PC-3 (cell line): ENCODE measurements at regions of chr2 and their contacts with region 1.

Region 1: DNA sequence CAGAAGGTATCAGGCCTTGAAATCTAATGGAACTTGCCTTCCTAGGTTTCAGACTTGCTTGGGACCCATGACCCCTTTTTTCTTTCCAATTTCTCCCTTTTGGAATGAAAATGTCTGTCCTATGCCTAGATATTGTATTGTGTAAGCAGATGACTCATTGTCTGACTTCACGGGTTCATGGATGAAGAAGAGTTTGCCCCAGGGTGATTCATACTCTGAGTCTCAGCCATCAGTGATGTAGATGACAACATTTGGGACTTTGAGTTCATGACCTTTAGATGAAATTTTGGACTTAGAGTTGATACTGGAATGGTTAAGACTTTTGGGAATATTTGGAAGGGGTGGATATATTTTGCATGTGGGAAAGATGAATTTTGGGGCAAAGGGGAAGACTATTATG is 11.2 kb upstream of the SCYGR5 start:
- DNase-seq: peak; percentile 85
- ATAC-seq: peak; percentile 68
- H3K4me3 ChIP-seq: no peak overlapping the region
- H3K27ac ChIP-seq: no peak overlapping the region
- H3K4me1 ChIP-seq: 0 out of 2 replicates have a peak, but pooled peaks cover 5% of the 10 kb centered on the region
- H3K27me3 ChIP-seq: no peaks in the 10 kb centered on the region
- CTCF ChIP-seq: no peak

Region 2: DNA sequence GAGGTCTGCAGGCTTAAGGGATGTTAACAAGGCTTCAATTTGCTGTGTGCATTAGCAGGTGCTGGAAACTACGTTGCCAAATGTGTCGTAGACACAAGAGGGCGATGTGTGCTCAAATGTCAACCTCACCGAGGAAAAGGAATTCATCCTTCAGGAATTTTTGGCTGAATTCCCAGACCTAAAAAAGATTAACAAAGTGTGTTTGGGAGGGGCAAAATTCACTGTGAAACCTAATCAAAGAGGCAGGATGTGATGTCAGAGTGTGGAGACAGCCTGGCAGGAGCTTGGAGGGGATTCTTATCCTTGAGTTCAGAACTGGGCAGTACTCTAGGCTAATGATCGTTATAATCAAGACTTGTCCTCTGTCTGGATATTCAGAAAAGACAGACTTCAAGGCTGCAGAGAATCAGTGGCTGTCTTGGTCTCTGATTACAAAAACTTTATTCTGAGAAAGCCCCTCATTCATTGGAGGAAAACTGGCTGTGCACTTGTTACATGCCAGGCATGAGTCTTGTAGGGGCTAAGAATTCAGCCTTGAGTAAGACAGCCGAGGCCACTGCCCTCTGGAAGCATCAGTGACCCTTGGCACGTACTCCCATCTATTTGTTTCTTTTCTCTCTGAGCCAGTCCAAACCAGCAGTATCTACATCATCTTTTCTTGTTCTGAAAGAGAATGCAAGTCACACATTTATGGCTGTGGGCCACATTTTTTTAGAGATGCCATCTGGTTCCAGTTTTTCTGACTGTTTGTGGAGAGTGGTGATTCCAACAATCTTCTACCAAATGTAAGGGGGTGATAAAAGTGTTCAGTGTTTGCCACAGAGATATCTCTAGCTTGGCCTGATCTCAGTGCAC is 249.1 kb before region 1 on chr2:
- CTCF ChIA-PET with region 1: interaction called, 4 read pairs
- POLR2A ChIA-PET with region 1: no interaction called
- intact Hi-C with region 1: loop called (anchors 2 kb)
- DNase-seq: peak; percentile 99
- ATAC-seq: peak; percentile 91
- H3K4me3 ChIP-seq: no peak overlapping the region
- H3K27ac ChIP-seq: peak overlapping the region; percentile 48
- H3K4me1 ChIP-seq: peaks cover 14% of the 10 kb centered on the region
- H3K27me3 ChIP-seq: no peaks in the 10 kb centered on the region
- CTCF ChIP-seq: peak; percentile 90

Region 3: DNA sequence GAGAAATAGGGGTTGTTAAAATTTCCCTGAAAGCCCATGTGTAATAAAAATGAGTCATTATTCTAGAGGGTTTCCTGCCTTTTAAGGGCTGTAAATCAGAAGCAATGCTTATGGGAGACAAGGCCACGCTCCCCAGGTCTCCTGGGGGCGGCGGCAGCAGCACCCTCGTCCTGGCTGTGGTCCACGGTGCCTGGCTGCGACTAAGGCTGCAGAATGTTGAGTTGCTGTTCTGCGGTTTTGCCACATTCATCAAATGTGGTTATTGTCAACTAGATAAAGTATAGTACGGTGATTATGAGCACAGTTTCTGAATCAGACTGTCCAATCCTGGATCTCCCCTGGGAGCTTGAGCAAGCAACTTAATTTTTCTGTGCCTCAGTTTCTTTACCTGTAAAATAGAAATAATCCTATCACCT is 195.4 kb before region 1 on chr2:
- CTCF ChIA-PET with region 1: no interaction called
- POLR2A ChIA-PET with region 1: no interaction called
- intact Hi-C with region 1: no loop called
- DNase-seq: peak; percentile 64
- ATAC-seq: peak; percentile 84
- H3K4me3 ChIP-seq: no peak overlapping the region
- H3K27ac ChIP-seq: no peak overlapping the region
- H3K4me1 ChIP-seq: peaks cover 28% of the 10 kb centered on the region
- H3K27me3 ChIP-seq: no peaks in the 10 kb centered on the region
- CTCF ChIP-seq: no peak

Region 4: DNA sequence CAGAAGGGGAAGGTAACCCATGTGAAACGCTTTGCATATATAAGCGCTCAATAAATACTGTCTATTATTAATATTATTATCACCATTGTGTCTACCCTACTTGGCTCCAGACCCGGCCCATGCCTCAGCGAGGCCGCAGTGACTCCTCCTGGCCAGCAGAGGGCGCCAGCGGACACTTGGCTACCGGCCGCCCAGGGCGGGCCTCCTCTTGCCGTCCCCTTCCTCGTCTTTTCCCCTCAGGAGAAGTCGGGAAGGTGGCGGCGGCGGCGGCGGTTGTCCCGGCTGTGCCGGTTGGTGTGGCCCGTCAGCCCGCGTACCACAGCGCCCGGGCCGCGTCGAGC is 183.6 kb before region 1 on chr2 and contains the start of gene AGFG1:
- CTCF ChIA-PET with region 1: no interaction called
- POLR2A ChIA-PET with region 1: no interaction called
- intact Hi-C with region 1: loop called (anchors 5 kb)
- DNase-seq: peak; percentile 84
- ATAC-seq: peak; percentile 53
- H3K4me3 ChIP-seq: peak within 1 kb of the TSS; percentile 94
- H3K27ac ChIP-seq: no peak within 1 kb of the TSS
- H3K4me1 ChIP-seq: peaks cover 42% of the 10 kb centered on the region
- H3K27me3 ChIP-seq: no peaks in the 10 kb centered on the region
- CTCF ChIP-seq: peak; percentile 87
- total RNA-seq, gene AGFG1: 44.0 and 56.3 TPM in 2 replicates

Region 5: DNA sequence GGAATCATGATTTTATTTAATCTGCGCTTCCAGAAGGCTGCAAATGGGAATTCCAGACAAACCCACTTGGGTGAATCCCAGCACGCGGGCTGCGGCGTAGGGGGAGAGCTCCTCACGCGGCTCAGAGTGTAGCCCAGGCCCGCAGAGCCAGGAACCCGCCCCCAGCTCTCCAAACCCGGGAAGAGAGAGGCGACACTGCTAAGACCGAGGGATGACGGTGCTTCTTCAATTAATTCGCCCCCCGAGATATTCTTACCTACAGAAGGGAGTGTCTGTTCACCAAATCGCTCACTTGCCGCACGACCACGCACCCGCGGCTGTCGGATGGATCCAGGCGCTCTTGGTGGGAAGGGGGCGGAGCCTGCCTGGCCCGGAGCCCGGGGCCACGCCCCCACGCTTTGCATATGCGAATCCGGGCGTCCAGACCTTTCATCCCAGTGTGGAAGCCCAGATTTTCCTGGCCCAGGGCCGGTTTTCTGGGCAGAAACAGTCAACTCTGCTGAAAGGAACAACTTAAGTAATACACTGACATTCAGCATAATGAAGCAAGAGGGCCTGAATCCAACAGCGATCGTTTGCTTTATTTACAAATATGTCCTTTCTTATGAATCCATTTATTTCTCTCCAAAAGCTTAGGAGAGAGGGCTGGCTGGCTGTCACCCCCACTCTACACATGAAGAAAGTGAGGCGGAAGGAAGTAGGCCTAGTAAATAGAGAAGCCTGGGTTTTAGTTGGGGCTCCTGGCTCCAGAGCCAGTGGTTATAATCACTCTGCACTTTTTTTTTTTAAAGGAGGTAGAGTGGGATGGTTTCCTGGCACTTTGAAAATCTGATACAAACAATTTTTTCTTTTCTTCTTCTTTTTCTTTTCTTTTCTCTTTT is 62.5 kb after region 1 on chr2 and contains the start of gene SLC19A3:
- CTCF ChIA-PET with region 1: no interaction called
- POLR2A ChIA-PET with region 1: no interaction called
- intact Hi-C with region 1: no loop called
- DNase-seq: no peak
- ATAC-seq: no peak
- H3K4me3 ChIP-seq: no peak within 1 kb of the TSS
- H3K27ac ChIP-seq: no peak within 1 kb of the TSS
- H3K4me1 ChIP-seq: no peaks in the 10 kb centered on the region
- H3K27me3 ChIP-seq: no peaks in the 10 kb centered on the region
- CTCF ChIP-seq: no peak
- total RNA-seq, gene SLC19A3: 0.26 TPM in 1 of 2 replicates, not detected in the other

Region 6: GRCh38 chr2:227766373-227766883 is 111.0 kb after region 1 on chr2:
- CTCF ChIA-PET with region 1: interaction called, 20 read pairs
- POLR2A ChIA-PET with region 1: no interaction called
- intact Hi-C with region 1: loop called (anchors 1 kb)
- DNase-seq: peak; percentile 81
- ATAC-seq: peak; percentile 100
- H3K4me3 ChIP-seq: no peak overlapping the region
- H3K27ac ChIP-seq: no peak overlapping the region
- H3K4me1 ChIP-seq: no peaks in the 10 kb centered on the region
- H3K27me3 ChIP-seq: no peaks in the 10 kb centered on the region
- CTCF ChIP-seq: peak; percentile 91

Region 7: DNA sequence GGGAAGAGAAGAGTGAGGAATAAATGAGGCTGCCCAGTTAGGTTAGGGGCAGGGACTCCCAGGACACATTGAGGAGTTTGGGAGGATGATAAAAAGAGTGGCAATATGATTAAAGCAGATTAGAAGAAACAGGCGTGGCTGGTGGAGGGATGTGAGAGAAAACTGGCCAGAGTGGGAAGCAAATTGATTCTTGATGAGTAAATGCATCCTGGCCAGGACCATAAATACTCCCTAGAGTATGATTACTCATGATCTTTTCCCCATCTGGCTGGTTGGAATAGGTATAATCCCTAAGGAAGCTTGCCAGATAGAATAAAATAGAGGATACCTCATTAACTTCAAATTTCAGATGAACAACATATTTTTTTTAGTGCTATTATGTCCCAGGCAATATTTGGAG is 194.5 kb after region 1 on chr2:
- CTCF ChIA-PET with region 1: no interaction called
- POLR2A ChIA-PET with region 1: no interaction called
- intact Hi-C with region 1: loop called (anchors 1 kb)
- DNase-seq: peak; percentile 72
- ATAC-seq: peak; percentile 76
- H3K4me3 ChIP-seq: no peak overlapping the region
- H3K27ac ChIP-seq: peak overlapping the region; percentile 82
- H3K4me1 ChIP-seq: peaks cover 47% of the 10 kb centered on the region
- H3K27me3 ChIP-seq: no peaks in the 10 kb centered on the region
- CTCF ChIP-seq: no peak

Region 8: DNA sequence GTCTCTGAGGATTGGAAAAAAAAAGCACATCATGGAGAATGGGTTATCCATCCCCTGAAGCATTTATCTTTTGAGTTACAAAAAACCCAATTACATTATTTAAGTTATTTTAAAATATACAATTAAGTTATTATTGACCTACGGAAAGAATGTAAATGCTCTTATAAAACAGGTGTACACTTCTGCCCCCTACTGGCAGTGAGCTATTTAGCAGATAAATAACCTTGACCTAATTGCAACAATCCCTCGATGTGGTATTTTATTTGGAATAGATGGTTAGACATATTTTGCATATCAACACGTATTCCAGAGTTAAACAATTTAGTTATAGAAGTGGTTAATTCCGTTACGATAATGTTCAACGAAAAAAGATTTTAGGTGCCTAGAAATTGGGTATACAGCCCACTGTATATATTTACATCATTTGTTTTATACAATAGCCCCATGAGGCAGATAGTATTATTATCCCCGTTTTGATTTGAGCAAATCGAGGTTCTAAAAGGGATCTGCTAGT is 206.8 kb after region 1 on chr2:
- CTCF ChIA-PET with region 1: interaction called, 10 read pairs
- POLR2A ChIA-PET with region 1: no interaction called
- intact Hi-C with region 1: loop called (anchors 5 kb)
- DNase-seq: peak; percentile 71
- ATAC-seq: no peak
- H3K4me3 ChIP-seq: peak overlapping the region; percentile 37; the same call in 1 of the 2 replicates
- H3K27ac ChIP-seq: peak overlapping the region; percentile 97
- H3K4me1 ChIP-seq: peaks cover 22% of the 10 kb centered on the region
- H3K27me3 ChIP-seq: no peaks in the 10 kb centered on the region
- CTCF ChIP-seq: peak; percentile 75

Region 9: GRCh38 chr2:227884511-227884947 is 229.1 kb after region 1 on chr2:
- CTCF ChIA-PET with region 1: no interaction called
- POLR2A ChIA-PET with region 1: no interaction called
- intact Hi-C with region 1: loop called (anchors 1 kb)
- DNase-seq: peak; percentile 79
- ATAC-seq: peak; percentile 82
- H3K4me3 ChIP-seq: no peak overlapping the region
- H3K27ac ChIP-seq: no peak overlapping the region
- H3K4me1 ChIP-seq: peaks cover 24% of the 10 kb centered on the region
- H3K27me3 ChIP-seq: no peaks in the 10 kb centered on the region
- CTCF ChIP-seq: peak; percentile 87